ENCODE measurements at regions of chr4 and their contacts with region 1.

Region 1: DNA sequence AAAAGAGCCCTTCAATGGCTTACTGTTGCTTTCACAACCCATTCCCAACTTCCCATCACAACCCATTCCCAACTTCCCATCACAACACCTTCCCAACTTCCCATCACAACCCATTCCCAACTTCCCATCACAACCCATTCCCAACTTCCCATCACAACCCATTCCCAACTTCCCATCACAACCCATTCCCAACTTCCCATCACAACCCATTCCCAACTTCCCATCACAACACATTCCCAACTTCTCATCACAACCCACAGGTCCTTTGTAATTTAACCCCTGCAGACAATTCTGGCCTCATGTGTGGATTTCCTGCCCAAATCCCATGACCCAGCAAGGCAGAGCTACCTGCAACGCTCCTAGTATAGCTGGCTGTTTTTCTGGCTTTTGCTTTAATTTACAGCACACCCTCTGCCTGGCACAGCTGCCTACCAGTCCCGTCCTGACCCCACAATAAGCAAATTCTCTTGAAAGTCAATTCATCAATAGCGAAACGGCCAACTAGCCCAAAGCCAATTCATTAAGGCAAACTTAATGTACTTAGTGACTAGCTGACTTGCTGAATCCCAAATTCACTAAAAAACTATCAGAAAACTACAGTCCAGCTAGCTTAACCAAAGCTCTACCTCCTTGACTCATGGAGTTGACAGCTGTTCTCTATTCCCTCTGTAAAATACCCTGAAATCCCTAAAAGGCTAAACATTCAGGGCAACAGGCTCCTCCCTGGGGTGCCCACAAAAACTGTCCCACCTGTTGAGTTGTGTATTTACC is 75.6 kb downstream of the AFAP1 start:
- DNase-seq: peak in 17 of 35 experiments; percentile 2 to 35 (median 24)
- ATAC-seq: peak in 2 of 4 experiments; percentile 30 to 60
- H3K4me3 ChIP-seq: no peak overlapping the region
- H3K4me3 Mint-ChIP-seq: peak overlapping the region in 2 of 3 donors; percentile 34 to 56
- H3K27ac ChIP-seq: no peak overlapping the region
- H3K27ac Mint-ChIP-seq: peak overlapping the region; percentile 59 to 81
- H3K4me1 ChIP-seq: peaks cover 0 to 11% of the 10 kb centered on the region in 2 experiments
- H3K4me1 Mint-ChIP-seq: peaks cover 21 to 44% (median 29%) of the 10 kb centered on the region in 3 donors
- H3K27me3 ChIP-seq: no peaks in the 10 kb centered on the region
- H3K27me3 Mint-ChIP-seq: peaks cover 1 to 3% of the 10 kb centered on the region in 2 donors

Region 2: GRCh38 chr4:7876201-7876875 is 12.2 kb after region 1 on chr4:
- CTCF ChIA-PET with region 1: interaction called in 1 of 2 experiments, 11 read pairs
- POLR2A ChIA-PET with region 1: no interaction called
- DNase-seq: peak in 10 of 35 experiments; percentile 11 to 53 (median 26)
- ATAC-seq: peak; percentile 79 to 93 (median 91)
- H3K4me3 ChIP-seq: no peak overlapping the region
- H3K4me3 Mint-ChIP-seq: peak overlapping the region; percentile 15 to 72 (median 45)
- H3K27ac ChIP-seq: peak overlapping the region; percentile 55
- H3K27ac Mint-ChIP-seq: peak overlapping the region; percentile 87 to 97
- H3K4me1 ChIP-seq: peaks cover 0 to 27% of the 10 kb centered on the region in 2 experiments
- H3K4me1 Mint-ChIP-seq: peaks cover 20 to 67% (median 40%) of the 10 kb centered on the region in 3 donors
- H3K27me3 ChIP-seq: no peaks in the 10 kb centered on the region
- H3K27me3 Mint-ChIP-seq: no peaks in the 10 kb centered on the region

Region 3: DNA sequence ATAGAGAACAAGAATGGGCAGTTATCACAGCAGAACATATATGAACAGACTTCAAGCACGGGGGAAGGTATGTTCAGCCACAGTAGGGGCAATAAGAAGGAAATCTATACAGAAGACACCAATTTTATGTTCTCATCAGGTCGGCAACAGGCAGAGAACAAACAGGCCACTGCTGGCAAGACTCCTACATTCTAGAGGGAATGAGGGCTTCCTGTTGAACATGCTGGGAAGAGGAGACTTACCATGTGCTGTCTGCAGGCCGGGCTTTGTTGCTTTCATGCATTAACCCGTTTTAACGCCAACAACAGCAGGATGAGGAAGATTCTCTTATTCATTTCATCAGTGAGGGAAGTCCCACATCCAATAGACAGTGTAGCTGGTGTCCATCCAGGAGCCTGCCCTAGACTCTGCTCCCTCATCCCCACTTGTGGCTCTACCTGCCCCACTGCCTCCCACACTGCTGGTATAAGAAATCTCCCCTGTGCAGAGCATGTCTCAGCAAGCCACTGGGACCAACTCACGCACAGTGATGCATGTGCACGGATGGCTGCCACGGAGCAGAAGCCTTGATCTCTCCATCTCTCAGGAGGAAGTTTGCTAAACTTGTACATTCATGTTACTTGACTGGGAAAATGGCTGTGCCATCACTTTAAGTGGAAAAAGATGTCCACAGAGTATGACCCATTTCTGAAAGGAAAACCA is 491.9 kb after region 1 on chr4:
- CTCF ChIA-PET with region 1: no interaction called
- POLR2A ChIA-PET with region 1: no interaction called
- DNase-seq: peak in 1 of 35 experiments; percentile 4
- ATAC-seq: no peak
- H3K4me3 ChIP-seq: no peak overlapping the region
- H3K4me3 Mint-ChIP-seq: no peak overlapping the region
- H3K27ac ChIP-seq: no peak overlapping the region
- H3K27ac Mint-ChIP-seq: no peak overlapping the region
- H3K4me1 ChIP-seq: no peaks in the 10 kb centered on the region
- H3K4me1 Mint-ChIP-seq: no peaks in the 10 kb centered on the region
- H3K27me3 ChIP-seq: peaks cover 0 to 29% of the 10 kb centered on the region in 2 experiments
- H3K27me3 Mint-ChIP-seq: peaks cover 1 to 10% of the 10 kb centered on the region in 2 donors